ENCODE measurements at regions of chr2 and their contacts with region 1.

Region 1: GRCh38 chr2:44955593-44956392 is 14.3 kb downstream of the SIX3 start:
- DNase-seq: peak; percentile 73 to 89
- H3K4me3 ChIP-seq: peak overlapping the region; percentile 20 to 39 (median 28)
- H3K27ac ChIP-seq: no peak overlapping the region
- H3K4me1 ChIP-seq: peaks cover 32 to 48% (median 47%) of the 10 kb centered on the region in 4 donors
- H3K27me3 ChIP-seq: peaks cover 18 to 87% (median 56%) of the 10 kb centered on the region in 3 donors
- CTCF ChIP-seq: peak in 5 of 7 experiments; percentile 52 to 89 (median 79)
- EP300 ChIP-seq: no peak
- POLR2A ChIP-seq: no peak

Region 2: GRCh38 chr2:44045061-44045460 is 910.7 kb before region 1 on chr2:
- intact Hi-C with region 1: loop called (anchors 5 kb)
- DNase-seq: no peak
- H3K4me3 ChIP-seq: no peak overlapping the region
- H3K27ac ChIP-seq: no peak overlapping the region
- H3K4me1 ChIP-seq: peaks cover 0 to 7% (median 3%) of the 10 kb centered on the region in 4 donors
- H3K27me3 ChIP-seq: no peaks in the 10 kb centered on the region
- CTCF ChIP-seq: no peak
- EP300 ChIP-seq: no peak
- POLR2A ChIP-seq: no peak

Region 3: GRCh38 chr2:44392338-44392943 is 563.4 kb before region 1 on chr2:
- intact Hi-C with region 1: loop called (anchors 10 kb)
- DNase-seq: peak; percentile 48 to 68
- H3K4me3 ChIP-seq: no peak overlapping the region
- H3K27ac ChIP-seq: no peak overlapping the region
- H3K4me1 ChIP-seq: no peaks in the 10 kb centered on the region
- H3K27me3 ChIP-seq: no peaks in the 10 kb centered on the region
- CTCF ChIP-seq: peak in 4 of 7 experiments; percentile 17 to 51 (median 32)
- EP300 ChIP-seq: no peak
- POLR2A ChIP-seq: no peak

Region 4: DNA sequence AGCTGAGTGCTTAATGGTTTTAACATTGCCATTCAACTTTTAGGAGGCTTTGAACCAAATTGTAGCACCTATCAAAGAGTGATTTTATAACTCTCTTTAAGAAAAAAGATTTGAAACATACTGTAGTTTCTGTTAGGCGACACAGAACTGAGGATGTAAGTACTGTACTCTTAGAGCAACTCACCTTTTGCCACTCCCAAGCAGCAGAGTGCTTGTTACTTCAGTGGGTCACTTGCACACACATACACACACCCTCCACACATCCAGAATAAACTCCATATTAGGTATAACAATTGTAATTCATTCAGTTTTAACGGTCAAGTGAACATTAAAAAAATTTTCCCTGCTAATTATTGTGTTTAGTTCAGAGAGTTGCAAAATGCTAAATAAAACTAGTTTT is 475.7 kb before region 1 on chr2:
- intact Hi-C with region 1: loop called (anchors 5 kb)
- DNase-seq: no peak
- H3K4me3 ChIP-seq: no peak overlapping the region
- H3K27ac ChIP-seq: no peak overlapping the region
- H3K4me1 ChIP-seq: no peaks in the 10 kb centered on the region
- H3K27me3 ChIP-seq: no peaks in the 10 kb centered on the region
- CTCF ChIP-seq: no peak
- EP300 ChIP-seq: no peak
- POLR2A ChIP-seq: no peak

Region 5: DNA sequence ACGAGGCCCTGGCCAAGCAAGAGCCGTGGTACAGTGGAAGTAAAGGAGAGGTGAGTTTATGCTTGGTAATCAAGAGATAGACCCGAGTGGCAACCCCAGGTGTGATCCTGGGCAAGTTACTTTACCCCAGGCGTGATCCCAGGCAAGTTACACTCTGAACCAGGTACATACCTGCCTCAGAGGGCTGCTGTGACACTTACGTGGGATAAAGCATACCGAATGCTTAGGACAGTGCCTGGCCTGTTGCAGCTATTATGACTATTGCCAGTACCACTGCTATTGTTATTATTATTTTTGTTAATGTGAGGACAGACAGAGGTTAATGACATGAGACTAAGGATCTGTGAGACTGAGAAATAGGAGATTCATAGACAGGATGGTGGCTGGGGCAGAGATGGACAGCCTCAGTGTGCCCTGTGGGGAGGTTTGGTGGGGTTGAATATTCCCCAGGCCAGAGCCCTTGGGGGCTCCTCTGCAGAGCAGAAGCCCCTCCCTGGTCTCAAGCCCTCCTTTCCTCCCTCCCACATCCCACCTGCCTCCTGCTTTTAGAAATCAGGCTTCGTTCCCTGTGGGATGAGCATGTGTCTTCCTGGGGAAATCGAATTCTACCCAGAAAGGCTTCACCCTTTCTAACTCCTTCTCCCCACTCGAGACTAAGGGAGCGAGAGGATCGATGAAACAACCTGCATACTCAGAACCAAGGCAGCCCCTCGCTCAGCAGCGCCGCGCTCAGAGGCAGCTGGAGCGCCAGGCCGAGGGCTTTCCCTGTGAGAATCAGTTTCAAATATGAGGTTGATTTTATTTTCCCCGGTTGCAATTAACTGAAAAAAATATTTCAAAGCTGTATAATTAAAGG is 76.3 kb before region 1 on chr2:
- intact Hi-C with region 1: no loop called
- DNase-seq: no peak
- H3K4me3 ChIP-seq: no peak overlapping the region
- H3K27ac ChIP-seq: no peak overlapping the region
- H3K4me1 ChIP-seq: no peaks in the 10 kb centered on the region
- H3K27me3 ChIP-seq: peaks cover 0 to 51% (median 0%) of the 10 kb centered on the region in 3 donors
- CTCF ChIP-seq: no peak
- EP300 ChIP-seq: no peak
- POLR2A ChIP-seq: no peak

Measured in stomach (tissue), 19 donors.